ENCODE measurements at regions of chr17 and their contacts with region 1.

Region 1: DNA sequence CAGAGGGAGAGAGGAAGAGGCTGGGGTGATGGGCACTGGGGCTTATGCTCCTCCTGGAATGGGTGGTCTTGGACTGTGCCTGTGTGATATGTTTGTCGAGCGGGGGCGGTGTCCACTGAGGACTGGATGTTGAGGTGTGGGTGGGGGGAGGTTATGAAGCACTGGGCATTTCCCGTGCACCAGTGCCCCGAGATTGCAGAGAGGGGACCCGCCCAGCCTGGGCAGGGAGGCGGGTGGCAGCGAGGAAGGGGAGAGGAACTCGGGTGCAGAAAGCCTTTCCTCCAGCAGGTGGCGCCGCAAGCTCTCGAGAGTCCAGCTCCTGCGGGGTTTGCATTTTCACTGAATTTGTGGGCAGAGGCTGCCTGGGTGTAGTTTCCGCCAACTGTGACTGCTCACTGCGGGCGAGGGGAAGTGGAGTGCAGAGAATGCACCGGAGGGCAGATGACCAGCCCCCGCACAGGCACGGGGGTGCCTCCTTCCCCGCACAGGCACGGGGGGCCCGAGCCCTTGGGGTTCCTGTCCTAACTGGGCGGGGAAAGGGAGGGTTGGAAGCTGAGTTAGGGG is 190.6 kb downstream of the SEC14L1 start:
- DNase-seq: peak; percentile 93
- ATAC-seq: peak; percentile 92 to 94

Region 2: GRCh38 chr17:77372444-77373298 is 41.3 kb after region 1 on chr17:
- intact Hi-C with region 1: loop called in 1 of 2 experiments (anchors 5 kb)
- DNase-seq: peak; percentile 88
- ATAC-seq: peak; percentile 73 to 74

Region 3: GRCh38 chr17:77494664-77495435 is 163.5 kb after region 1 on chr17:
- intact Hi-C with region 1: loop called (anchors 1 to 2 kb)
- DNase-seq: peak; percentile 80
- ATAC-seq: peak; percentile 62 to 69

Measured in left cardiac atrium (tissue), 4 donors.